ENCODE measurements at regions of chr10 and their contacts with region 1.

Region 1: GRCh38 chr10:72375585-72375984 is 20.9 kb upstream of the DNAJB12 start:
- DNase-seq: peak; percentile 53
- ATAC-seq: peak; percentile 99
- H3K4me3 ChIP-seq: no peak overlapping the region
- H3K27ac ChIP-seq: no peak overlapping the region
- H3K4me1 ChIP-seq: no peaks in the 10 kb centered on the region
- H3K27me3 ChIP-seq: no peaks in the 10 kb centered on the region
- CTCF ChIP-seq: peak; percentile 62
- EP300 ChIP-seq: no peak
- POLR2A ChIP-seq: no peak
- RAD21 ChIP-seq: peak; percentile 53

Region 2: DNA sequence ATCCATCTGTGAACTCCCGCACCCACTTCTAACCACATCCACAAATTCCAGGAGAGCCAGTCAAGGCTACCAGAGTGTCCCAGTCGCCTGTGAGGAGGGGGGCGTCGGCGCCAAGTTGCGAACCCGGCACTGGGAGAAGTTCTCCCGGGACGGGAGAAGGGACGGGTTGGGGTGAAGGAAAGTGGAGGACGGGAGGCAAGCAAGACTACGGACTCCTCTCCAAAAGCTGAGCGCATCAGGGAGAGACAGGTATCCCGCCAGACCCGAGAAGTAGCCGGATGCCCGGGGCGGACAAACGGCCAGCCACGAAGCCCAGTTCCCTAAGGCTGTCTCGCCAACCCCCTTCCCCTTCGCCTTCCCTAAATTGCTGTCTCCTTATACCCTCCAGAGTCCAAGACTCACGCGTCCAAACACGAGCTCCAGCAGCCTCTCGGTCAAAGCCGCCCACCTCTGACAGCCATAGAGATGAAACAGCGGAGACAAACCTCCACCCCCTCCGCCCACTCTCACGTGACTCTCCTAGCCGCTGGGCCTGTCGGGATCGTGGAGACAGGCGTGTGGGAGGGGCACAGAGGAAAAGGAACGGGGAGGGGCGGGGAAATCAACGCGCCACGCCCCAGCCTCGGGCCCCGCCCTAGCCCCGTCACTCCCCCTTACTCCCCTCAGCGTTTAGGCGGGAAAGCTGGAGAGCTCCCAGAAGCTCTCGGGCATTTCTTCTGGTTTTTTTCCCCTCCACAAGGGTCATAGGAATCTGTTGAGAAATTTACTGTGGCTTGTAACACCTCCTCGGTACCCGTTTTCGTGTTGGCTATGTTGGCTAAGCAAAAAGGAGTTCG is 250.2 kb after region 1 on chr10 and contains the start of gene MICU1:
- CTCF ChIA-PET with region 1: no interaction called
- POLR2A ChIA-PET with region 1: no interaction called
- in situ Hi-C with region 1: no loop called
- intact Hi-C with region 1: loop called (anchors 1 kb)
- DNase-seq: peak; percentile 91
- ATAC-seq: peak; percentile 99
- H3K4me3 ChIP-seq: peak within 1 kb of the TSS; percentile 92 to 98 (median 93)
- H3K27ac ChIP-seq: peak within 1 kb of the TSS; percentile 65
- H3K4me1 ChIP-seq: peaks cover 27% of the 10 kb centered on the region
- H3K27me3 ChIP-seq: no peaks in the 10 kb centered on the region; a peak in 1 of 5 replicates
- CTCF ChIP-seq: peak; percentile 12; the same call in 1 of the 2 replicates
- EP300 ChIP-seq: peak in 1 of 2 experiments; percentile 32; a peak in 1 of 4 replicates
- POLR2A ChIP-seq: peak; percentile 78 to 86
- RAD21 ChIP-seq: 0 out of 2 replicates have a peak, but pooled peaks have one; percentile 6
- total RNA-seq, gene MICU1: 56.1 and 70.3 TPM in 2 replicates

Region 3: DNA sequence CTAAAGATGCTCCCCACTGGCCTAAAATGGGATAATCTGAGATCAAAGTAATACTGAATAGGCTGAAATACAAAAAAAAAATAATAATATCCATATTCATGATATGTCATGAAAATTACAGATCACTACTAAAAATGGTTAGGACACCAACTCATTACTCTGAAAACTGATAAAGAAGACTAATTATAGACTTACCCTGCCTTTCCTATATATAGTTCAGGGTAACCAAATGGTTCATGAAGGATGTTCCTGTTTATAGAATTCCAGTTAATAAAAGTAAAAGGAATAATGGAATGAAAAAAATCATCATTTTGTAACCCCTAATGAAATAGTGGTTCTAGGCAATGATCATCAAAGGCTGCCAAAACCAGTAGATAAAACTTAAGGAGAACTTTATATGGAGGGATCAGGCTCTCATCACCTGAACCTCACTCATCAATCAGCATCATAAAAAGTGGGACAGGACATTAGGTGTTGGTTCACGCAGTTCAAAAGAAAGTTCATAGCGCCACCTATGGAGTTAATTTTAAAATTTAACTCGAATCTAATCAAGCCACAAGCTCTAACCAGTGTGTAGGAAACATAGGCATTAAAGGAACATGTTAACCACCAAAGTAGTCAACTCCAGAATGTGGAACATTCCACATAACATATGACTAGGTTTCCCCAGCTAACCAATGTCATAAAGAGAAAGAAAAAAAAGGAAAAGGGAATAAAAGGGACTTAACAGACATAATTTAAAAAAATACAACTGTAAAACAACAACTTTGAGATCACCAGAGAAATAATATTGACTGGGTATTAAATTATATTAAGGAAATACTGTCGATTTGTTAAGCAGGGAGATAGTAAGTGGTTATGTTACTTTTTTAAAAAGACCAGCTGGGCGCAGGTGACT is 685.4 kb after region 1 on chr10:
- CTCF ChIA-PET with region 1: no interaction called
- POLR2A ChIA-PET with region 1: no interaction called
- in situ Hi-C with region 1: no loop called
- intact Hi-C with region 1: loop called (anchors 10 kb)
- DNase-seq: peak; percentile 17
- ATAC-seq: peak; percentile 56; the same call in 1 of the 3 replicates
- H3K4me3 ChIP-seq: no peak overlapping the region
- H3K27ac ChIP-seq: no peak overlapping the region
- H3K4me1 ChIP-seq: peaks cover 19% of the 10 kb centered on the region; the same call in 1 of the 2 replicates
- H3K27me3 ChIP-seq: no peaks in the 10 kb centered on the region
- CTCF ChIP-seq: peak; percentile 47
- EP300 ChIP-seq: no peak
- POLR2A ChIP-seq: no peak
- RAD21 ChIP-seq: no peak

Measured in HepG2 (cell line).